ENCODE measurements at regions of chrX and their contacts with region 1.

Region 1: DNA sequence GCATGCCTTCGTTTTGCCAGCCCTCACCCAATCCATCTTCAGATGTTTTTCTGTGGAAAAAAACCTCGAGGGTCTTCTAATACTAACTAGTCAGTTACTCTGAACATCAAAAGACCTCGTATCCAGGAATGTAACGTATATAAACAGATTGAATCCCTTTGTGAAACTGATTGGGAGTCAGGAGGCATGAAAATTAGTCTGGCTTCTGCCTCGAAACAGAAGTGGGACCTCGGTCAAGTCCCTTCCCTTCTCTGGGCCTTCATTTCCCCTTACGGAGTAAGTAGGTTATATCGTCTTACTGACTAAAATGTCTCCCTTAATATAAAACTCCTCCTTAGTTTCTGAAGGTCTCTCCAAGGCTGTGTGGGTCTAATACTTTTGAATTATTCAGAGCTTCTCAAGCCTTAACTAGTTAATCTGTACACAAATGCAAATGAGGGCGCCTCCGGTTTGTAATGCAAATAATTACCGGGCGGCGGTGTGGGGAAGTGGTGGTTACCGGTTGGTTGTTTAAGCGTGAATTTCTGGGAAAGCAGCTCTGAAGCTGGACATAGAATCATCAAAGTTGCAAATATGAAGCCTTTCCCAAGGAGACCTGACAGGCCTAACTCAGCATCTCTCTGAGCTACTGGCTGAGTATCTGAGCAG is 11.4 kb upstream of the NKRF start:
- DNase-seq: no peak
- H3K4me3 ChIP-seq: no peak overlapping the region
- H3K27ac ChIP-seq: no peak overlapping the region
- H3K4me1 ChIP-seq: no peaks in the 10 kb centered on the region
- H3K27me3 ChIP-seq: no peaks in the 10 kb centered on the region
- CTCF ChIP-seq: no peak
- POLR2A ChIP-seq: no peak

Region 2: GRCh38 chrX:119495734-119496726 is 121.6 kb before region 1 on chrX:
- intact Hi-C with region 1: no loop called
- DNase-seq: no peak
- H3K4me3 ChIP-seq: no peak overlapping the region
- H3K27ac ChIP-seq: no peak overlapping the region
- H3K4me1 ChIP-seq: no peaks in the 10 kb centered on the region
- H3K27me3 ChIP-seq: peaks cover 11% of the 10 kb centered on the region
- CTCF ChIP-seq: no peak
- POLR2A ChIP-seq: no peak

Region 3: GRCh38 chrX:119693040-119693995 is 75.7 kb after region 1 on chrX and contains the start of gene SEPTIN6:
- intact Hi-C with region 1: loop called in 1 of 2 experiments (anchors 10 kb)
- DNase-seq: peak; percentile 80 to 86 (median 82)
- H3K4me3 ChIP-seq: peak within 1 kb of the TSS; percentile 48 to 74 (median 62)
- H3K27ac ChIP-seq: peak within 1 kb of the TSS; percentile 72 to 94 (median 92)
- H3K4me1 ChIP-seq: peaks cover 0 to 6% of the 10 kb centered on the region in 2 donors
- H3K27me3 ChIP-seq: no peaks in the 10 kb centered on the region
- CTCF ChIP-seq: peak in 3 of 6 experiments; percentile 17 to 31 (median 29)
- POLR2A ChIP-seq: peak; percentile 89 to 92
- total RNA-seq, gene SEPTIN6: 86.5 to 204 (median 128) TPM

Region 4: DNA sequence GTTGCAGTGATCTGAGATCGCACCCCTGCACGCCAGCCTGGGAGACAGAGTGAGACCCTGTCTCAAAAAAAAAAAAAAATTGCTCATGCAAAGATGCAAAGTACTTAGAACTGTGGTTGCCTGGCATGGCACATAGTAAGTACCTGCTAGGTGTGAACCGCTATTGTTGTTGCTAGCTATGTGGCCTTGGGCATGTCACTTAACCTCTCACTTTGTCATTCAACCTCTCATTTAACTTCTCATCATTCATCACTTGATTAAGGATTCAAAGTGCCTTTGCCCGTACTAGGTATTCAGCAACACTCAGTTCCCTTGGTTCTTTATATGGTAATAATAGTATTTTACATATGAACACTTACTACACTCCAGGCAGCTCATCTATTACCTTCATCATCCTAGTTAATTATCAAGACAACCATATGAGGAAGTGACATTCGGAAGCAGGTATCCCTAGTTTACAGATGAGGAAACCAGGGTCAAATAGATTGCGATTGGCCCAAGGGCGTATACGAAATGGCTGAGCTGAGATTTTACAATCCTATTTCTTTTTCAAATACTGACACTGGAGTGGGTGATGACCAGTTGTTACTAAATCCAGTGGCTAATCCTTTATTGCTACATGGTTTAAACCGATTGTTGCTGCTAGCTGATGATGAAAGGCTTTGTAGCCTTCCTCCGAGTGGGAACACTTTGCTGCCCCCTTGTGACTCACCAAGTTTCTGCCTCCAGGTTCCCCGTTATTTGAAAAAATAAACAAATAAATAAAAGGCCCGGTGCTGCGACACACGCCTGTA is 112.0 kb after region 1 on chrX:
- intact Hi-C with region 1: loop called in 1 of 2 experiments (anchors 10 kb)
- DNase-seq: peak; percentile 60 to 84 (median 63)
- H3K4me3 ChIP-seq: no peak overlapping the region
- H3K27ac ChIP-seq: no peak overlapping the region
- H3K4me1 ChIP-seq: no peaks in the 10 kb centered on the region
- H3K27me3 ChIP-seq: no peaks in the 10 kb centered on the region
- CTCF ChIP-seq: peak; percentile 22 to 64 (median 54)
- POLR2A ChIP-seq: no peak

Measured in adrenal gland (tissue), 19 donors.